ENCODE measurements at regions of chr12 and their contacts with region 1.

Region 1: GRCh38 chr12:43444940-43445564 is 107.0 kb downstream of the ADAMTS20 start:
- DNase-seq: no peak
- H3K4me3 ChIP-seq: no peak overlapping the region
- H3K27ac ChIP-seq: no peak overlapping the region
- H3K4me1 ChIP-seq: no peaks in the 10 kb centered on the region
- H3K27me3 ChIP-seq: no peaks in the 10 kb centered on the region
- CTCF ChIP-seq: peak; percentile 35 to 48 (median 45)
- POLR2A ChIP-seq: no peak

Region 2: DNA sequence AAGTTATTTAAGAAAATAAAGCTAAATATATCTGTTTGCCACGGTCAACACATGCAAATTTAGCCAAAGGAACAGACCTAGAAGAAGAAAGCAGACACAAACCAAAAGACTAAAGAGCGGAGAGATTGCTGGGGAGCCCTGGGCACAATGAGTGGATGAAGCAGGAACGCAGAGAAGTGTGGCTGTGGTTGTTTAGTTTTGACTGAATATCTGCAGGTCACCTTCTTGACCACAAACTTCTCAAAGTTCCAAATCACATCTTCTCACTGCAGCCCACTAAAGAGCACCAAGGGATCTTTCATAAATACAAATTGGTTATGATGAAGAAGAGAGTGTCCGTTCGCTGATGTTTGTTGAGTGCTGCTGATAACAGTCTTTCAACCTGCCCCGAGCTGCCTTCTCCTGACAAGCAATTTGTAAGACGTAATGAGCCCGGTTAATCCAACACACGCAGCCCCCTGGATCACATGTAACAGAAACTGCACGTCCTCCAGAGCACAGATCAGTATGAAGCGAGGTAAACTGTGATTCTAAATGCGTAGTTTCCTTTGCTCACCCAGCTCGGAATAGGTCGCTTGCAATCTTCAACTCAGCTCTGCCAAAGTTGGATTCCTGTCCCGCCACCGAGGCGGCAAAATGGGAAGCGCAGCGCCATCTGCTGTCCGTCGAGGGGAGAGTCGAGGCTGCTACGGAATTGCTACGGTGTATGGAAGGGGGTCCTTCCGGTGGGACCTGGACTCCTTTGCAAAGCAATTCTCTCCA is 1421.1 kb before region 1 on chr12:
- intact Hi-C with region 1: no loop called
- DNase-seq: peak; percentile 57 to 75
- H3K4me3 ChIP-seq: peak overlapping the region; percentile 26 to 64 (median 43)
- H3K27ac ChIP-seq: no peak overlapping the region
- H3K4me1 ChIP-seq: no peaks in the 10 kb centered on the region
- H3K27me3 ChIP-seq: no peaks in the 10 kb centered on the region
- CTCF ChIP-seq: peak; percentile 72 to 90 (median 82)
- POLR2A ChIP-seq: no peak

Region 3: GRCh38 chr12:43462080-43462479 is 17.0 kb after region 1 on chr12:
- intact Hi-C with region 1: no loop called
- DNase-seq: no peak
- H3K4me3 ChIP-seq: no peak overlapping the region
- H3K27ac ChIP-seq: no peak overlapping the region
- H3K4me1 ChIP-seq: no peaks in the 10 kb centered on the region
- H3K27me3 ChIP-seq: no peaks in the 10 kb centered on the region
- CTCF ChIP-seq: no peak
- POLR2A ChIP-seq: no peak

Region 4: GRCh38 chr12:43493261-43493797 is 48.3 kb after region 1 on chr12:
- intact Hi-C with region 1: loop called (anchors 2 kb)
- DNase-seq: no peak
- H3K4me3 ChIP-seq: no peak overlapping the region
- H3K27ac ChIP-seq: no peak overlapping the region
- H3K4me1 ChIP-seq: no peaks in the 10 kb centered on the region
- H3K27me3 ChIP-seq: no peaks in the 10 kb centered on the region
- CTCF ChIP-seq: no peak
- POLR2A ChIP-seq: no peak

Measured in breast epithelium (tissue), 4 donors.